ENCODE measurements at regions of chr10 and their contacts with region 1.

Region 1: GRCh38 chr10:75235375-75236177 is at the start of gene COMTD1:
- DNase-seq: peak; percentile 83
- H3K4me3 ChIP-seq: peak within 1 kb of the TSS; percentile 22 to 60 (median 42)
- H3K27ac ChIP-seq: no peak within 1 kb of the TSS
- H3K4me1 ChIP-seq: peaks cover 11% of the 10 kb centered on the region
- H3K27me3 ChIP-seq: no peaks in the 10 kb centered on the region
- CTCF ChIP-seq: peak; percentile 100
- POLR2A ChIP-seq: no peak
- total RNA-seq, gene COMTD1: 14.0 and 18.6 TPM in 2 replicates

Region 2: GRCh38 chr10:74244097-74244685 is 991.4 kb before region 1 on chr10:
- CTCF ChIA-PET with region 1: interaction called, 17 read pairs
- POLR2A ChIA-PET with region 1: no interaction called
- dilution Hi-C with region 1: no loop called
- intact Hi-C with region 1: loop called (anchors 1 kb)
- DNase-seq: peak; percentile 75
- H3K4me3 ChIP-seq: no peak overlapping the region
- H3K27ac ChIP-seq: no peak overlapping the region
- H3K4me1 ChIP-seq: peaks cover 3% of the 10 kb centered on the region
- H3K27me3 ChIP-seq: no peaks in the 10 kb centered on the region
- CTCF ChIP-seq: peak; percentile 7 to 26
- POLR2A ChIP-seq: no peak

Region 3: DNA sequence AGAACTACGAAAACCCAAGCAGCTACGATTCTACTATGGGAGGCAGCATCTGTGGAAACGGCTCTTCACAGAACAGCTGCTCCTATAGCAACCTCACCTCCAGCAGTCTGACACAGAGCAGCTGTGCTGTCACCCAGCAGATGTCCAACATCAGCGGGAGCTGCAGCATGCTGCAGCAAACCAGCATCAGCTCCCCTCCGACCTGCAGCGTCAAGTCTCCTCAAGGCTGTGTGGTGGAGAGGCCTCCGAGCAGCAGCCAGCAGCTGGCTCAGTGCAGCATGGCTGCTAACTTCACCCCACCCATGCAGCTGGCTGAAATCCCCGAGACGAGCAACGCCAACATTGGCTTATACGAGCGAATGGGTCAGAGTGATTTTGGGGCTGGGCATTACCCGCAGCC is 205.7 kb before region 1 on chr10:
- CTCF ChIA-PET with region 1: interaction called, 4 read pairs
- POLR2A ChIA-PET with region 1: no interaction called
- dilution Hi-C with region 1: no loop called
- intact Hi-C with region 1: loop called (anchors 5 kb)
- DNase-seq: no peak
- H3K4me3 ChIP-seq: no peak overlapping the region
- H3K27ac ChIP-seq: no peak overlapping the region
- H3K4me1 ChIP-seq: peaks cover 4% of the 10 kb centered on the region
- H3K27me3 ChIP-seq: no peaks in the 10 kb centered on the region
- CTCF ChIP-seq: no peak
- POLR2A ChIP-seq: no peak

Region 4: DNA sequence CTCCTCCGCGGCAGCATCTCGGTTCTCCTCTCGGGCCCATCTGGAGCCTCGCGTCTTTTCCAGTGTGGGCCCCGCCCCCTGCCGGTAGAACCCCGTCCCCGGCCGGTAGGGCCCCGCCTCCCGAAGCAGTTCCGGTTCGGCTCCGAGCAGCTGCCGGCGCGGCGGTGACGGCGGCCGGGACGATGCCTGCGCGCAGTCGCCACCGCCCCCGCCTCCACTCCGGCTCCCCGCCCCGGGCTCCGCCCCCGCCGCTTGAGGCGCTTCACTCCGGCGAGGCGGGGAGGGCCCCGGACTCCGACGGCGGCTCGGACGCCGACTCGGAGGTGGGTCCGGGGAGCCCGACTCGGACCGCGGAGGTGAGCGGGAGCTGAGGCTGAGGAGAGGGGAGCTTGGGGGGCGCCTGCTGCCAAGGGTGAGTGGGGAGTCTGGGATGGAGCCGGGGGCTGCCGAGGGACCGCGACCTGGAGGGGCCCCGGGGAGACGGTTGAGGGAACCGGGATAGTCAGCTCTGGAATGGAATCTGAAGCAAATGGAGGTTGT is 124.1 kb before region 1 on chr10 and contains the start of gene SAMD8:
- CTCF ChIA-PET with region 1: interaction called, 7 read pairs
- POLR2A ChIA-PET with region 1: no interaction called
- dilution Hi-C with region 1: no loop called
- intact Hi-C with region 1: loop called (anchors 1 kb)
- DNase-seq: peak; percentile 97
- H3K4me3 ChIP-seq: peak within 1 kb of the TSS; percentile 88 to 98 (median 93)
- H3K27ac ChIP-seq: peak within 1 kb of the TSS; percentile 94
- H3K4me1 ChIP-seq: peaks cover 15% of the 10 kb centered on the region
- H3K27me3 ChIP-seq: no peaks in the 10 kb centered on the region
- CTCF ChIP-seq: peak in 1 of 2 donors; percentile 29
- POLR2A ChIP-seq: no peak
- total RNA-seq, gene SAMD8: 22.8 and 23.2 TPM in 2 replicates

Region 5: GRCh38 chr10:75187961-75188426 is 47.6 kb before region 1 on chr10:
- CTCF ChIA-PET with region 1: interaction called, 61 read pairs
- POLR2A ChIA-PET with region 1: no interaction called
- dilution Hi-C with region 1: no loop called
- intact Hi-C with region 1: loop called (anchors 1 kb)
- DNase-seq: peak; percentile 66
- H3K4me3 ChIP-seq: no peak overlapping the region
- H3K27ac ChIP-seq: no peak overlapping the region
- H3K4me1 ChIP-seq: peaks cover 7% of the 10 kb centered on the region
- H3K27me3 ChIP-seq: no peaks in the 10 kb centered on the region
- CTCF ChIP-seq: peak; percentile 62 to 73
- POLR2A ChIP-seq: no peak

Region 6: GRCh38 chr10:75223507-75223906 is 12.1 kb before region 1 on chr10:
- CTCF ChIA-PET with region 1: interaction called, 21 read pairs
- POLR2A ChIA-PET with region 1: interaction called, 4 read pairs
- dilution Hi-C with region 1: no loop called
- intact Hi-C with region 1: no loop called
- DNase-seq: no peak
- H3K4me3 ChIP-seq: no peak overlapping the region
- H3K27ac ChIP-seq: peak overlapping the region; percentile 12
- H3K4me1 ChIP-seq: peaks cover 40% of the 10 kb centered on the region
- H3K27me3 ChIP-seq: no peaks in the 10 kb centered on the region
- CTCF ChIP-seq: no peak
- POLR2A ChIP-seq: no peak

Measured in endothelial cell of umbilical vein (primary cell).